ENCODE measurements at regions of chr7 and their contacts with region 1.

Region 1: GRCh38 chr7:25259587-25260243 is 31.4 kb upstream of the NPVF start:
- DNase-seq: peak; percentile 80
- H3K4me3 ChIP-seq: no peak overlapping the region
- H3K27ac ChIP-seq: no peak overlapping the region
- H3K4me1 ChIP-seq: peaks cover 0 to 26% (median 18%) of the 10 kb centered on the region in 4 donors
- H3K27me3 ChIP-seq: no peaks in the 10 kb centered on the region
- CTCF ChIP-seq: peak; percentile 73 to 86 (median 82)
- EP300 ChIP-seq: no peak
- POLR2A ChIP-seq: no peak

Region 2: DNA sequence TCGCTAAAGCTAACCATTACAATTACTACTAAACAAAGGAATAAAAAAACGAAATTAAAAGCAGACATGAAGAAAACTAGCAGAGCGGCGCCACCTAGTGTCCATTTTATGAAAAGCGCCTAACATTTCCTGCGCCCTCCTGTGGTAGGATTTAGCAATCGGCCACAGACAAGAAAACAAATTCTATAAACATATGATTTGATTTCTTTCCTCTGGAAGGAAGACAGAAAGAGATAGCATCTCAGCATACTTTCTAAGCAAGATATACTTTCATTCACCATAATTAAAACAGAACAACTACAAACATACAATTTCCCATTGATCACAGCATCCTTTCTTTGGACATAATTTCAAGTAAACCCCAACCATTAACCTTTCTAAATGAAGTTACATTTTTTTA is 306.2 kb after region 1 on chr7:
- intact Hi-C with region 1: loop called (anchors 1 kb)
- DNase-seq: peak; percentile 81
- H3K4me3 ChIP-seq: no peak overlapping the region
- H3K27ac ChIP-seq: peak overlapping the region in 2 of 4 donors; percentile 70 to 76
- H3K4me1 ChIP-seq: peaks cover 0 to 48% (median 40%) of the 10 kb centered on the region in 4 donors
- H3K27me3 ChIP-seq: no peaks in the 10 kb centered on the region
- CTCF ChIP-seq: peak; percentile 99 to 100 (median 100)
- EP300 ChIP-seq: no peak
- POLR2A ChIP-seq: no peak